Activated CD4-positive, alpha-beta T cell treated with anti-CD3 and anti-CD28 coated beads for 36 hours (primary cell): ENCODE measurements at regions of chr5 and their contacts with region 1.

Region 1: GRCh38 chr5:62460578-62460983 is 48.0 kb downstream of the IPO11 start:
- DNase-seq: no peak
- ATAC-seq: peak; percentile 61
- H3K4me3 Mint-ChIP-seq: no peak overlapping the region
- H3K27ac Mint-ChIP-seq: no peak overlapping the region
- H3K4me1 Mint-ChIP-seq: no peaks in the 10 kb centered on the region
- H3K27me3 Mint-ChIP-seq: no peaks in the 10 kb centered on the region

Region 2: GRCh38 chr5:62138607-62139006 is 322.0 kb before region 1 on chr5:
- CTCF ChIA-PET with region 1: no interaction called
- POLR2A ChIA-PET with region 1: no interaction called
- intact Hi-C with region 1: no loop called
- DNase-seq: no peak
- ATAC-seq: no peak
- H3K4me3 Mint-ChIP-seq: no peak overlapping the region
- H3K27ac Mint-ChIP-seq: no peak overlapping the region
- H3K4me1 Mint-ChIP-seq: no peaks in the 10 kb centered on the region
- H3K27me3 Mint-ChIP-seq: peaks cover 14% of the 10 kb centered on the region

Region 3: GRCh38 chr5:62450259-62450658 is 10.3 kb before region 1 on chr5:
- CTCF ChIA-PET with region 1: interaction called, 14 read pairs
- POLR2A ChIA-PET with region 1: no interaction called
- intact Hi-C with region 1: no loop called
- DNase-seq: no peak
- ATAC-seq: no peak
- H3K4me3 Mint-ChIP-seq: no peak overlapping the region
- H3K27ac Mint-ChIP-seq: no peak overlapping the region
- H3K4me1 Mint-ChIP-seq: no peaks in the 10 kb centered on the region
- H3K27me3 Mint-ChIP-seq: no peaks in the 10 kb centered on the region

Region 4: GRCh38 chr5:62475072-62475471 is 14.5 kb after region 1 on chr5:
- CTCF ChIA-PET with region 1: interaction called, 11 read pairs
- POLR2A ChIA-PET with region 1: interaction called, 5 read pairs
- intact Hi-C with region 1: no loop called
- DNase-seq: no peak
- ATAC-seq: no peak
- H3K4me3 Mint-ChIP-seq: no peak overlapping the region
- H3K27ac Mint-ChIP-seq: no peak overlapping the region
- H3K4me1 Mint-ChIP-seq: peaks cover 2% of the 10 kb centered on the region
- H3K27me3 Mint-ChIP-seq: no peaks in the 10 kb centered on the region

Region 5: DNA sequence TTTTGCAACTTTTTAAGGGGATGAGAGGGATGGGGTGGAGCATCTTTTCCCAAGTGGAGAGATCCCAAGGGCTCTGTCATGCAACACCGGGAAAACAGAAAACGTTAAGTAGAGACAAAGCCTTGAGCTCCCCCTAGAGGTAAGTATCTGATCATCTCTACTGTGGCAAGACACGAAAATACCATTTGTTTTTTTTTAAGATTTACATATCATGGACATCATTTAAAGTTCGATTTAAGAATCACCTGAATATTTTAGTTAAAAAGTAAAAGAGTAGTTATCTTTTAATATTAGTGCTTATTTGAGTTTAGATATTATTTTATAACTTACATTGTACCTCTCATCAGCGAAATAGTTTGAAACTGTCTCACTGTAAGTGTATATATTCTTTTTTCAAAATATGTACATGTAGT is 318.4 kb after region 1 on chr5:
- CTCF ChIA-PET with region 1: interaction called, 8 read pairs
- POLR2A ChIA-PET with region 1: no interaction called
- intact Hi-C with region 1: loop called (anchors 1 kb)
- DNase-seq: no peak
- ATAC-seq: no peak
- H3K4me3 Mint-ChIP-seq: no peak overlapping the region
- H3K27ac Mint-ChIP-seq: no peak overlapping the region
- H3K4me1 Mint-ChIP-seq: peaks cover 5% of the 10 kb centered on the region
- H3K27me3 Mint-ChIP-seq: peaks cover 4% of the 10 kb centered on the region